ENCODE measurements at regions of chr18 and their contacts with region 1.

Region 1: GRCh38 chr18:23259701-23260582 is 124.7 kb downstream of the CABLES1 start:
- DNase-seq: peak in 12 of 35 experiments; percentile 2 to 43 (median 10)
- ATAC-seq: peak; percentile 59 to 74 (median 70)
- H3K4me3 ChIP-seq: peak overlapping the region; percentile 15 to 55
- H3K4me3 Mint-ChIP-seq: peak overlapping the region; percentile 53 to 89 (median 58)
- H3K27ac ChIP-seq: peak overlapping the region; percentile 23
- H3K27ac Mint-ChIP-seq: peak overlapping the region; percentile 47 to 82
- H3K4me1 ChIP-seq: peaks cover 12 to 32% of the 10 kb centered on the region in 2 experiments
- H3K4me1 Mint-ChIP-seq: peaks cover 32 to 36% (median 36%) of the 10 kb centered on the region in 3 donors
- H3K27me3 ChIP-seq: peaks cover 0 to 12% of the 10 kb centered on the region in 2 experiments
- H3K27me3 Mint-ChIP-seq: no peaks in the 10 kb centered on the region

Region 2: GRCh38 chr18:22930089-22930713 is 329.7 kb before region 1 on chr18:
- CTCF ChIA-PET with region 1: no interaction called
- POLR2A ChIA-PET with region 1: no interaction called
- DNase-seq: peak; percentile 27 to 86 (median 72)
- ATAC-seq: peak; percentile 35 to 48 (median 44)
- H3K4me3 ChIP-seq: no peak overlapping the region
- H3K4me3 Mint-ChIP-seq: no peak overlapping the region
- H3K27ac ChIP-seq: no peak overlapping the region
- H3K27ac Mint-ChIP-seq: no peak overlapping the region
- H3K4me1 ChIP-seq: peaks cover 3 to 4% of the 10 kb centered on the region in 2 experiments
- H3K4me1 Mint-ChIP-seq: peaks cover 12 to 14% (median 13%) of the 10 kb centered on the region in 3 donors
- H3K27me3 ChIP-seq: no peaks in the 10 kb centered on the region
- H3K27me3 Mint-ChIP-seq: no peaks in the 10 kb centered on the region

Region 3: DNA sequence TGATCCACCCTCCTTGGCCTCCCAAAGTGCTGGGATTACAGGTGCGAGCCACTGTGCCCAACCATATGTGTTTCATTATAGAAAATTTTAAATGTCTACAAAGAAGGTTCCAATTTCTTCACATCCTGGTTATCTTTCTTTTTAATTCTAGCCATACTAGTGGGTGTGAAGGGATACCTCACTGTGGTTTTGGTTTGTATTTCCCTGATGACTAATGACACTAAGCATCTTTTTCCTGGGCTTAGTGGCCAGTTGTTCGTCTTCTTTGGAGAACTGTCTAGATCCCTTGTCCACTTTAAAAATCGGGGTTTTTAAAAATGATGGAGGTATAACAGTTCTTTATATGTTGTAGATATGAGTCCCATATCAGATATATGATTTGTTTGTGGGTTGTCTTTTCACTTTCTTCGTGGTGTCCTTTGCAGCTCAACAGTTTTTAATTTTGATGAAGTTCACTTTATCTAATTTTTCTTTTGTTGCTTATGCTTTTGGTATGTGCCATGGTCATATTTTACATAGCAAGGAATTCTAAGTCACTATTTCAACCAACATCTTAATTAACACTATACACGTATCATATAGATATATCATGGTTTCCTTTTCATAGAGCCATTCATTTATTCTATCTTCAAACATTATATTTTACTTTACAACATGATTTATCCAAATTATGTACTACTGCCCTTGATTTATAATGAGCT is 58.2 kb after region 1 on chr18:
- CTCF ChIA-PET with region 1: no interaction called
- POLR2A ChIA-PET with region 1: interaction called in 1 of 2 experiments, 18 read pairs
- DNase-seq: no peak
- ATAC-seq: no peak
- H3K4me3 ChIP-seq: no peak overlapping the region
- H3K4me3 Mint-ChIP-seq: no peak overlapping the region
- H3K27ac ChIP-seq: no peak overlapping the region
- H3K27ac Mint-ChIP-seq: no peak overlapping the region
- H3K4me1 ChIP-seq: no peaks in the 10 kb centered on the region
- H3K4me1 Mint-ChIP-seq: peaks cover 0 to 2% (median 0%) of the 10 kb centered on the region in 3 donors
- H3K27me3 ChIP-seq: no peaks in the 10 kb centered on the region
- H3K27me3 Mint-ChIP-seq: no peaks in the 10 kb centered on the region